Thyroid gland (tissue), 4 donors: ENCODE measurements at regions of chr5 and their contacts with region 1.

Region 1: DNA sequence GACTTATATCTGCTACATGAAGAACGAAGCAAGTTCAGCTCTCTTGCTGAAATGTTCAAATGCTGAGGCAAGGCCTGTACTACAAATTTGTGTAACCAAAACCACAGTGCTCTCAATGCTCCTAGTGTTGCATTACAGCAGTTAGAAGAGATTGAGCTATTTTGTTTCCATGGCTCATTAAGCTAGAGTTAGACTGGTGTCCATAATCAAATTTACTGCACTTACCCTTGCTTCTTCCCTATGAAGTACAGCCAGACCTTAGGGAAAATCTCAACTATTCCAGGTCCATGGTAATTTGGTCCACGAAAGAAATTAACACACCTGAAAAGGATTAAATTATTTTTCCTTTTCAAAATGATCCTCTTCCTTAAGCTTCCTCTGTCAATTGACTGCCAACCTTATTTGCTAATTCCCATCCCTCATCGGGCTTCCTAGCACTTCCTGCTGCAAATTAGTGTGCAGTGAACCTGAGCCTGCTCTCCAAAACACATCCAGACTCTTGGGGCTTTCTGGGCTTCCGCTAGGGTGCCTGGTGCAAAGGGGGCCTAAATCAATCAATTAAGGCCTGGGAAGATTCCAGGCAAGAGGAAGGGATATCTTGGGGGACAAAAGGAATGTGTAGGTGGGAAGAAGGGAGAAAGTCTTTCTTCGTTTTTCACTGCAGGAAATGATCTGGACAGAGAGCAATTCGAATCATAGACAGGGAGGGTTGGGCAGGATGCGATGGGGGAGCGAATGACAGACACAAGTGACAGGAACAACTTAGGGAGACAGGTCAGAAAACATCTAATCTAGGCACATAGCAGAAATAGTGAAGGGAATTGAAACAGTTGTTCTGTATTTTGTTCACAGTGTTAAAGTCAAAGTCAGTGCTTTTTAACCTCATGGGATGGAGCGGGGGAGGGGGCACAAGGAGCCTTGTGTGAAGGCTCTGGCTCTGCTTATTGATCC is 542.4 kb downstream of the RAB3C start:
- DNase-seq: peak; percentile 15 to 24
- H3K4me3 ChIP-seq: no peak overlapping the region
- H3K27ac ChIP-seq: peak overlapping the region; percentile 90 to 99 (median 96)
- H3K4me1 ChIP-seq: peaks cover 33 to 50% of the 10 kb centered on the region in 2 donors
- H3K27me3 ChIP-seq: no peaks in the 10 kb centered on the region
- CTCF ChIP-seq: no peak
- POLR2A ChIP-seq: no peak

Region 2: DNA sequence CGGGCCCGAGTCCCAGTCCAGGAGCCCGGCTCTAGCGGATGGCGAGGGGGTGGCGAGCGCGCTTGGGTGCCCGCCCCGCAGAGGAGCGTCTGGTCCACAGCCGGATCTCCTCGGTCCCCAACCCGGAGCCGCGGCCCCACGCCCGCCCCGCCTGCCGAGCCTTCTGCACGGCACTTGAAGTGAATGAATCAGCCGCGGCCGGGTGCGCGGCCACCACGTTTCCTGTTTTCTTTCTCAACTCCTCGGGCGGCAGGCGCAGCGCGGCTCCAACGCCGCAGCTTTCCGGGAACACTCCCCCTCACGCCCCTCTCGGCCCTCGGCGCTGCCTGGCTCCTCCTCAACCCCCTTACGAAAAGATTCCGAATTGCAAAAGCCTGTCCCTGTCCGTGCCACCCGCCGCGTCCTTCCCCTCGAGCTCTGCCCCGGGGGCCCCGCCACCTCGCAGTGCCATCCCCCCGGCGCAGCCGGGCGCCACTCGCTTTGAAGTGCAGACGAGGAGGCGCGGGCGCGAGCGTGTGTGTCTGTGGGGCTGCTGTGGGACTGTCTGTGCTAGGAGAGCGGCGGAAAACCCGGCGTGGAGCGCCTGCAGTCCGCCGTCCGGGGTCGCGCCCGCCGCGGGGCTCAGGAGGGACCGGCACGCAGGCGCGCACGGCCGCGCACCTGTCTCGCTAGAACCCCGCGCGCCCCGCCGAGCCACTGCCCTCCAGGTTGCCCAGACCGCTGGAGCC is 85.8 kb before region 1 on chr5:
- intact Hi-C with region 1: loop called (anchors 5 kb)
- DNase-seq: peak; percentile 69 to 79
- H3K4me3 ChIP-seq: peak overlapping the region; percentile 12 to 79 (median 79)
- H3K27ac ChIP-seq: peak overlapping the region; percentile 22 to 90 (median 79)
- H3K4me1 ChIP-seq: peaks cover 18 to 32% of the 10 kb centered on the region in 2 donors
- H3K27me3 ChIP-seq: no peaks in the 10 kb centered on the region
- CTCF ChIP-seq: no peak
- POLR2A ChIP-seq: peak in 1 of 2 donors; percentile 69

Region 3: GRCh38 chr5:59107692-59108091 is 17.6 kb before region 1 on chr5:
- intact Hi-C with region 1: loop called (anchors 2 kb)
- DNase-seq: peak; percentile 31 to 43
- H3K4me3 ChIP-seq: no peak overlapping the region
- H3K27ac ChIP-seq: no peak overlapping the region
- H3K4me1 ChIP-seq: peaks cover 9 to 11% of the 10 kb centered on the region in 2 donors
- H3K27me3 ChIP-seq: no peaks in the 10 kb centered on the region
- CTCF ChIP-seq: no peak
- POLR2A ChIP-seq: no peak